Activated CD8-positive, alpha-beta T cell treated with anti-CD3 and anti-CD28 coated beads, Interleukin-2, amount 10 ng/mL, durations not matched to agents 7 days and 5 days (primary cell): ENCODE measurements at regions of chr6 and their contacts with region 1.

Region 1: DNA sequence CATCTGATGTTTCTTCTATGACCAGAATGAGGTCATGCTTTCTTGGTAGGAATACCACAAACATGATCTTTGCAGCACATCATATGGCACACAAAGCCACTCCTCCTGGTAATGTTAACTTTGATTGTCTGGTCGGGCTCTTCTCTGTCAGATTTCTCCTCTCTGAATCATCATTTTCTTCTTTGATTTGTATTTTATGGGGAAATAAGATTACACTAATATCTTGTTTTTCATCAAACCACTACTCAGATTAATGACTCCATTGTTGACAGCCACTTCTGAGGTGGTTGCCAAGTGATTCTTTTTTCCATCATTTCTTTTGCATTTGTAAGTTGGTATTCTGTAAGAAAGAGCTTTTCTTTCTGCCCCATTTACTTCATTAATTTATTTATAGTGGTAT is 29.5 kb downstream of the TRMT11 start:
- DNase-seq: no peak
- ATAC-seq: no peak
- H3K4me3 Mint-ChIP-seq: no peak overlapping the region
- H3K27ac Mint-ChIP-seq: no peak overlapping the region
- H3K4me1 Mint-ChIP-seq: peaks cover 7% of the 10 kb centered on the region
- H3K27me3 Mint-ChIP-seq: no peaks in the 10 kb centered on the region

Region 2: DNA sequence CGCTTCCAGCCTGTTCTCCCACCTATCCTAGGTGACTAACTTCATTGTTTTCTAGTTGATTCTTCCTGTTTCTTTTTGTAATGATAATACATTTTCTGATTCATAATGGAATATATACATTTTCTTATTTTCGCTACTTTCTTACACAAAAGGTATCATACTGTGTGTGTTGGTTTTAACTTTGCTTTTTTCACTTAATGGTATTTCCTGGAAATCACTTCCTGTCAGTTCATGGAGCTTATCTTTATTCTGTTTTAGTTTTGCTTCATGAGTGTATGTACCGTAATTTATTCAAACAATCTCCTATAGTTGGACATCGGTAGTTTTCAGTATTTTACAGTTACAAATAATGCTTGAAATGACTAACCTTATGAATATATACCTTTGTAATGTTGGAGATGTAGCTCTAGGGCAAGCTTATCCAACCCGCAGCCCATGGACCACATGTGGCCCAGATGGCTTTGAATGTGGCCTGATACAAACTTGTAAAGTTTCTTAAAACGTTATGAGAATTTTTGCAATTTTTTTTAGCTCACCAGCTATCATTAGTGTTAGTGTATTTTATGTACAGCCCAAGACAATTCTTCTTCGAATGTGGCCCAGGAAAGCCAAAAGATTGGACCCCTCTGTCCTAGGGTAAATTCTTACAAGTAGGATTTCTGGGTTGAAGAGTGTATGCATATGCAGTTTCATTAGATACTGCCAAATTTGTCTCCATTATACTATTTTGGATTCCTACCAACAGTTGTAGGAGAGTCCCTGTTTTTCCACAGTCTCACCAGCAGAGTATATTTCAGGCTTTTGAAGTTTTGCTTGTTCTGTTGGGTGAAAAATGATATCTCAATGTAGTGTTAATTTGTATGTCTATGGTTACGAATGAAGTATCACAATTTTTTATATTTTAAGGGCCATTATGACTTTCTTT is 12.8 kb before region 1 on chr6:
- CTCF ChIA-PET with region 1: no interaction called
- POLR2A ChIA-PET with region 1: no interaction called
- DNase-seq: no peak
- ATAC-seq: peak; percentile 33
- H3K4me3 Mint-ChIP-seq: peak overlapping the region; percentile 41
- H3K27ac Mint-ChIP-seq: peak overlapping the region; percentile 28
- H3K4me1 Mint-ChIP-seq: peaks cover 16% of the 10 kb centered on the region
- H3K27me3 Mint-ChIP-seq: no peaks in the 10 kb centered on the region

Region 3: GRCh38 chr6:126033696-126034095 is 17.8 kb after region 1 on chr6:
- CTCF ChIA-PET with region 1: interaction called, 14 read pairs
- POLR2A ChIA-PET with region 1: no interaction called
- DNase-seq: peak; percentile 35
- ATAC-seq: peak; percentile 73
- H3K4me3 Mint-ChIP-seq: no peak overlapping the region
- H3K27ac Mint-ChIP-seq: no peak overlapping the region
- H3K4me1 Mint-ChIP-seq: peaks cover 6% of the 10 kb centered on the region
- H3K27me3 Mint-ChIP-seq: no peaks in the 10 kb centered on the region